Activated CD8-positive, alpha-beta memory T cell treated with anti-CD3 and anti-CD28 coated beads, Interleukin-2, amount 10 ng/mL, durations not matched to agents 7 days and 5 days (primary cell): ENCODE measurements at regions of chr5 and their contacts with region 1.

Region 1: GRCh38 chr5:108345541-108346171 is 36.2 kb downstream of the FBXL17 start:
- DNase-seq: no peak
- ATAC-seq: peak; percentile 53
- H3K4me3 Mint-ChIP-seq: no peak overlapping the region
- H3K27ac Mint-ChIP-seq: no peak overlapping the region
- H3K4me1 Mint-ChIP-seq: no peaks in the 10 kb centered on the region
- H3K27me3 Mint-ChIP-seq: no peaks in the 10 kb centered on the region

Region 2: GRCh38 chr5:108260117-108260857 is 85.4 kb before region 1 on chr5:
- CTCF ChIA-PET with region 1: interaction called, 25 read pairs
- DNase-seq: peak; percentile 73
- ATAC-seq: peak; percentile 82
- H3K4me3 Mint-ChIP-seq: peak overlapping the region; percentile 46
- H3K27ac Mint-ChIP-seq: no peak overlapping the region
- H3K4me1 Mint-ChIP-seq: peaks cover 5% of the 10 kb centered on the region
- H3K27me3 Mint-ChIP-seq: no peaks in the 10 kb centered on the region

Region 3: GRCh38 chr5:108672639-108673038 is 327.0 kb after region 1 on chr5:
- CTCF ChIA-PET with region 1: no interaction called
- DNase-seq: no peak
- ATAC-seq: no peak
- H3K4me3 Mint-ChIP-seq: no peak overlapping the region
- H3K27ac Mint-ChIP-seq: no peak overlapping the region
- H3K4me1 Mint-ChIP-seq: no peaks in the 10 kb centered on the region
- H3K27me3 Mint-ChIP-seq: peaks cover 17% of the 10 kb centered on the region